RWPE1 (cell line): ENCODE measurements at regions of chr7 and their contacts with region 1.

Region 1: GRCh38 chr7:44240983-44241510 is 40.3 kb downstream of the YKT6 start:
- DNase-seq: peak; percentile 79
- H3K27ac ChIP-seq: peak overlapping the region; percentile 59
- CTCF ChIP-seq: peak; percentile 94

Region 2: DNA sequence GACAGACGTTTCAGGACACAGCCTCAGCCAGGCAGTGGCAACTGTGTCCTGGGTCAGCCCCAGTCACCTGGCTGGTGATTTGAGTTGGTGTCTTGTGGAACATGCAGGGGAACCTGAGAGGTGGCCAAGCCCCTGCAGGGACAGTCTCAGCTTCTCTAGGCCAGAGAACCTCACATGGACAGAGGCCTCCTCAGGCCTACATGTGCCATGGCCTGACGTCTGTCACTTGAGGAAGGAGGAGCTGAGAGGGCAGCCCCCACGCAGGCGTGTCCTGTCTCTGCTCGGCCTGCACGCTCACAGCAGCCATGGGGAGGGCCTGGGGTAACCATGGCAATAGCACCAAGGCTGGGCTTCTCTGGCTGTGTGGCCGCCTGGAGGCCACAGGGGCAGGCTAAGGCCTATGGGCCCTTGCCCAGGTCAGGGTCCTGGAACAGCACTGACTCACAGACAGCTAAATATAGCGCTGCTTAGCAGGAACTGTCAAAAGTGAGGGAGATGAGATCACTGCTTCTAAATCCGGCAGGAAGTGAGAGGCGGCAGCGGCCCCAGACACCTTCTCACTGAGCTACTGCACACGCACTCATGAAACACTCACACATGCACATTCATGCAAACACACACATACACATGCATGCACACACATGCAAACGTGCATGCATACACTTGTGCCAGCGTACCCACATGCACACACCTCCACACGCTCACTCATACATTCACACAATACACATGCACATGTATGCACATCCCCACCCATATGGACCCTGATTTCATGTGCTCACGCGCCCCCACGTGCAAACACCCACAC is 16.8 kb after region 1 on chr7:
- CTCF ChIA-PET with region 1: interaction called, 10 read pairs
- POLR2A ChIA-PET with region 1: no interaction called
- DNase-seq: peak; percentile 80
- H3K27ac ChIP-seq: peak overlapping the region; percentile 95
- CTCF ChIP-seq: no peak

Region 3: GRCh38 chr7:44565097-44565794 is 324.2 kb after region 1 on chr7:
- CTCF ChIA-PET with region 1: interaction called, 17 read pairs
- POLR2A ChIA-PET with region 1: no interaction called
- DNase-seq: peak; percentile 61
- H3K27ac ChIP-seq: peak overlapping the region; percentile 63
- CTCF ChIP-seq: peak; percentile 99

Region 4: DNA sequence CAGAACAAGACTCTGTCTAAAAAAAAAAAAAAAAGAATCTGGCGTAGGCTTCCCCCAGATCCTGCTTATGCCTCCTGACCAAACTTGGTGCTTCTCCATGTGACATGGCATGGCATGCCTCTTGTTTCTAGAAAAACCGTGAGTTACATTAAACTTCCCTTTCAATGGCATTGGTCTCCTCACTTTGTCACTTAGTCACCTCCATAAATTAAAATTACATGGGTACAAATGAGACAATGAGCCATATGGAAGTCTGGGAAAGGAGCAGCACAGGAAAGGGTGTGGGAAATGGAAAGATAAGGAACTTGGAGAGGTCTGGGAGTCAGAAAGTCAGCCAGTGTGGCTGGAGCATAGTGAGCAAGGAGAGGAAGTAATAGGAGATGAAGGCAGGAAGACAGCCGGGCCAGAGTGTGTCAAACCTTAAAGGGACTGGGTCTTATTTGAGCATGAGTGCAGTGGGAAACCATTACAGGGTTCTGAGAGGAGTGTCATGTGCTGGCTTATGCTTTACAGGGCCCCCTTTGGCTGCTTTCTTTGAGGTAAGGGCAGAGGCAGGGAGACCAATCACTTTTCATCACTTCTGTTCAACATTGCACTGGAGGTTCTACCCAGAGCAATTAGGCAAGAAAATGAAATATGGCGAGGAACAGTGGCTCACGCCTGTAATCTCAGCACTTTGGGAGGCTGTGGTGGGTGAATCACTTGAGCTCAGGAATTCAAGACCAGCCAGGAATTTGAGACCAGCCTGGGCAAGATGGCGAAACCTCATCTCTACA is 486.3 kb after region 1 on chr7:
- CTCF ChIA-PET with region 1: no interaction called
- POLR2A ChIA-PET with region 1: no interaction called
- DNase-seq: no peak
- H3K27ac ChIP-seq: peak overlapping the region; percentile 77
- CTCF ChIP-seq: no peak